ENCODE measurements at regions of chr7 and their contacts with region 1.

Region 1: GRCh38 chr7:1225441-1226185 is 7.1 kb upstream of the UNCX start:
- DNase-seq: no peak
- H3K4me3 ChIP-seq: no peak overlapping the region
- CTCF ChIP-seq: peak; percentile 70

Region 2: GRCh38 chr7:974820-975681 is 250.6 kb before region 1 on chr7 and contains the start of gene COX19:
- CTCF ChIA-PET with region 1: no interaction called
- POLR2A ChIA-PET with region 1: no interaction called
- DNase-seq: peak; percentile 37
- H3K4me3 ChIP-seq: peak within 1 kb of the TSS; percentile 95
- CTCF ChIP-seq: no peak

Region 3: DNA sequence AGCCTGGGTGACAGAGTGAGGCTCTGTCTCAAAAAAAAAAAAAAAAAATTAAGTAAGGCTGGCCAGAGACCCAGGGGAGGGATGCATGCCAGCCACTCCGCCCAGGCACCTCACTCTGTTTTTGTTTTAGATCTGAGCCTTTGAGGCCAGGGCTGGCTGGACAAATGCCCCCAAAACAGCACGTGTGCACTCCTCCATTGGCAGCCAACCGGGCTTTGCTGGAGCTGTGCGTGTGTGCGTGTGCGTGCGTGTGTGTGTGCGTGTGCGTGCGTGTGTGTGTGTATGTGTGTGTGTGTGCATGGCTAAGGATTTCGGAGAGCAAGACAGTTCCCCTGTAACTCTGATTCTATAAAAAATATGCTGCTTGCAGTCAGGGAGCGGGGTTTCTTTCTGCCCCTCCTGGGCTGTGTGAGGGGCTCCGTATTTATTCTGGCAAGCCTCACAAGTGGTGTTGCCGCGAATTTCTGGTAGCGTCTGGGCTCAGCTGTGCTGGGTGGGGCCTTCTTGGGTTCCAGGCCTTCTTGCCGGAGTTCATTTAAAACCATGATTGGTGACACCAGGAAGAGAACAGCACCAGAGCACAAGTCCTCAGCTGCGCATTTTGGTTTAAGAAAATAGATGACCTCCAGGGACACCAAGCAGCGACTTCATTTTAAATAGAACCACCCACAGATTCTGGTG is 21.0 kb before region 1 on chr7:
- CTCF ChIA-PET with region 1: interaction called, 12 read pairs
- POLR2A ChIA-PET with region 1: no interaction called
- DNase-seq: no peak
- H3K4me3 ChIP-seq: no peak overlapping the region
- CTCF ChIP-seq: no peak

Region 4: DNA sequence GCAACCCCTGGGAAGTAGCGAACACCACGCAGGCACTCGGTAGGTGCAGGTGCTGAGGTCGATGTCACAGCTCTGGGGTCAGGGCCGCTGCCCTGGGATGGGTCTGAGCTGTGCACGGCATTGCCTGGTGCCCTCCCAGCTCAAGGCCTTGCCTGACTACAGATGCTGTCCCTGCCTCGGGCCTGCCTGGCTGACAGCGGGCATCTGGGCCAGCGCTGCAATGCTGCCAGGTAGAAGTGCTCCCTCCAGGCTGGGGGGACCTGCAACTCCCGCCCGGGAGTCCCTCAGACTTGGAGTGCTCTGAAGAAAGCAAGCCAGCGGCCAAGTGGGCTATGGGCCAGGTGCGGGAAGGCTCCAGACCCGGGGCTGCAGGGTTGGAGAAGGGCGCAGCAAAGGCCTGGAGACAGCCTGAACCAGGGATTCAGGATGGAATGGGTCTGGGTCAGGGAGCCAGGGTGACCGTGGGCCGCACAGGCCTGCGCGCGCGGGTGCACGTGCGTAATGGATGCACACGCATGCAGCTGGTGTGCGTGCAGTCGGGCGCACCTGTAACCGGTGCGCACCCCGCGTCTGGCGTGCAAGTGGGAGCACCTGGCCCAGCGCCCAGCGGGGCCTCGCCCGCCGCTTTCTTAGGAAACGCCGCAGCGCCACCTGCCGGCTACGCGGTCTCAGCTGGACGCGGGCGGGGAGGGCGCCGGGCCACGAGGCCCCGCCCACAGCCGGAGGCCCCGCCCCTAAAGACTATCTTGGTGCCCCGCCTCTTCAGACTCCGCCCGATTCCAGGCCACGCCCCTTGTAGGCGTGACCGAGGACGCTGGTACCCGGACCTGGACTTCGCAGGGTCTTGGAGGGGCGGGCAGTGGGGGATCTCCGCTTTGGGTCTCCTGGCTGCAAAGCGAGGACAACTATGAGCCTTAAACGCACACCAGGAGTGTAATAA is 187.0 kb after region 1 on chr7:
- CTCF ChIA-PET with region 1: interaction called, 39 read pairs
- POLR2A ChIA-PET with region 1: no interaction called
- DNase-seq: no peak
- H3K4me3 ChIP-seq: no peak overlapping the region; the same call in 1 of the 2 replicates
- CTCF ChIP-seq: peak; percentile 78

Measured in AG04449 (cell line).